Pancreas (tissue), 10 donors: ENCODE measurements at regions of chr17 and their contacts with region 1.

Region 1: GRCh38 chr17:31433091-31433790 is 41.8 kb downstream of the RAB11FIP4 start:
- DNase-seq: no peak
- ATAC-seq: no peak
- H3K4me3 ChIP-seq: no peak overlapping the region
- H3K27ac ChIP-seq: no peak overlapping the region
- H3K4me1 ChIP-seq: no peaks in the 10 kb centered on the region
- H3K27me3 ChIP-seq: no peaks in the 10 kb centered on the region
- CTCF ChIP-seq: no peak

Region 2: DNA sequence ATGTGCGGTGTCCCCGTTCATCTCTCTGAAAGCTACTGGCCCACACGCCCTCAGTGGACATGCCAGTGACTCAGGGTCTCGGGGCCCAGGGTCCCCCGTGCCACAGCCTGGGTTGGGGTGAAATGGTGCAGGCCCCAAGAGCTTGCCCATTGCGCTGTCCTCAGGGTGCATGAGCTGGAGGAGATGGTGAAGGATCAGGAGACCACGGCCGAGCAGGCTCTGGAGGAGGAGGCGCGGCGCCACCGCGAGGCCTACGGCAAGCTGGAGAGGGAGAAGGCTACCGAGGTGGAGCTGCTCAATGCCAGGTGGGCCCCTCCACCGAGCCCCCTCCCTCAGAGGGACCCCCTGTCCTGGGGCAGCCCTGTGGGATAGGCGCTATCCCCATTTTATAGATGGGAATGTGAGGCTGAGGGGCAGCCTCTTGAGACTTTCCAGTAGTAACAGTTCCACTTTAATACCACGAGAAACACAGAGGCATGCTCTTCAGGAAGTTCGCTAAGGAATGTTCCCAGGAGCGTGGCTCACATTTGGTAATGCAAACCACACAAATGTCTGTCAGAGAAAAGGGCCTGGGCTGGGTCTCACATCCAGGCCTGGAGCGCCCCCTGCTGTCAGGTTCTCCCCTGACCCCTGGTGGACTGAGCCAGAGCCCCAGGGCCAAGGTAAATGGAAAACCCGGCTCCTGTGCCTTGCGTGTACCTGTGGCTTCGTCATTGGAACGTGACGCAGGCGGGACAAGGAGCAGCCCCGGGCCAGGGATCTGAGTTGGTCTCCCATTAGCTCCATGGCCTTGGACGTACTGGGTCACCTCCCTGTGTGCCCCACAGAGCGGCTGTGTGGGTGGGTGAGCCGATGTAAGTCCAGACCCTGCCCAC is 91.9 kb after region 1 on chr17:
- intact Hi-C with region 1: loop called (anchors 2 to 10 kb)
- DNase-seq: peak; percentile 77 to 99 (median 92)
- ATAC-seq: peak; percentile 90 to 94 (median 93)
- H3K4me3 ChIP-seq: no peak overlapping the region
- H3K27ac ChIP-seq: no peak overlapping the region
- H3K4me1 ChIP-seq: no peaks in the 10 kb centered on the region
- H3K27me3 ChIP-seq: no peaks in the 10 kb centered on the region
- CTCF ChIP-seq: peak; percentile 87 to 91 (median 89)